ENCODE measurements at regions of chr1 and their contacts with region 1.

Region 1: DNA sequence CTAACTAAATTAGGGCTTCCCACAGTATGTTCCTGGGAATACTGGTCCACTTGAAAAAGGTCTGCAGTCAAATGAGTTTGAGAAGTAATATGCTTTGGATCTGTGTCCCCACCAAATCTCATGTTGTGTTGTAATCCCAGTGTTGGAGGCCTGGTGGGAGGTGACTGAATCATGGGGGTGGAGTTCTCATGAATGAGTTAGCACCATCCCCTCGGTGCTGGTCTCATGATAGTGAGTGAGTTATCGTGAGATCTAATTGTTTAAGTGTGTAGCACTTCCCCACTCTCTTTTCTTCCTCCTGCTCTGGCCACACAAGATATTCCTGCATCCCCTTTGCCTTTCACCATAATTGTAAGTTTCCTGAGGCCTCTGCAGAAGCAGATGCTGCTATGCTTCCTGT is 16.9 kb upstream of the DMRTB1 start:
- DNase-seq: no peak
- ATAC-seq: peak; percentile 73
- H3K4me3 Mint-ChIP-seq: no peak overlapping the region
- H3K27ac Mint-ChIP-seq: peak overlapping the region; percentile 70
- H3K4me1 Mint-ChIP-seq: peaks cover 44% of the 10 kb centered on the region
- H3K27me3 Mint-ChIP-seq: peaks cover 13% of the 10 kb centered on the region; the same call in 1 of the 2 replicates
- CTCF ChIP-seq: no peak

Region 2: GRCh38 chr1:53182111-53182593 is 260.1 kb before region 1 on chr1:
- CTCF ChIA-PET with region 1: no interaction called
- POLR2A ChIA-PET with region 1: no interaction called
- DNase-seq: peak; percentile 90
- ATAC-seq: peak; percentile 79
- H3K4me3 Mint-ChIP-seq: no peak overlapping the region
- H3K27ac Mint-ChIP-seq: no peak overlapping the region
- H3K4me1 Mint-ChIP-seq: no peaks in the 10 kb centered on the region
- H3K27me3 Mint-ChIP-seq: peaks cover 16% of the 10 kb centered on the region; the same call in 1 of the 2 replicates
- CTCF ChIP-seq: peak; percentile 93

Region 3: GRCh38 chr1:53430261-53430660 is 12.0 kb before region 1 on chr1:
- CTCF ChIA-PET with region 1: interaction called, 19 read pairs
- POLR2A ChIA-PET with region 1: no interaction called
- DNase-seq: no peak
- ATAC-seq: peak; percentile 9; the same call in 1 of the 2 replicates
- H3K4me3 Mint-ChIP-seq: peak overlapping the region; percentile 52
- H3K27ac Mint-ChIP-seq: peak overlapping the region; percentile 99
- H3K4me1 Mint-ChIP-seq: peaks cover 85% of the 10 kb centered on the region
- H3K27me3 Mint-ChIP-seq: peaks cover 33% of the 10 kb centered on the region
- CTCF ChIP-seq: no peak

Region 4: GRCh38 chr1:53470155-53470554 is 27.9 kb after region 1 on chr1:
- CTCF ChIA-PET with region 1: interaction called, 13 read pairs
- POLR2A ChIA-PET with region 1: no interaction called
- DNase-seq: peak; percentile 98
- ATAC-seq: peak; percentile 98
- H3K4me3 Mint-ChIP-seq: peak overlapping the region; percentile 7
- H3K27ac Mint-ChIP-seq: no peak overlapping the region
- H3K4me1 Mint-ChIP-seq: peaks cover 16% of the 10 kb centered on the region
- H3K27me3 Mint-ChIP-seq: peaks cover 22% of the 10 kb centered on the region
- CTCF ChIP-seq: peak; percentile 90

Region 5: GRCh38 chr1:53562291-53562980 is 120.1 kb after region 1 on chr1:
- CTCF ChIA-PET with region 1: no interaction called
- POLR2A ChIA-PET with region 1: no interaction called
- DNase-seq: peak; percentile 3
- ATAC-seq: no peak
- H3K4me3 Mint-ChIP-seq: no peak overlapping the region
- H3K27ac Mint-ChIP-seq: no peak overlapping the region
- H3K4me1 Mint-ChIP-seq: peaks cover 9% of the 10 kb centered on the region; the same call in 1 of the 2 replicates
- H3K27me3 Mint-ChIP-seq: peaks cover 10% of the 10 kb centered on the region
- CTCF ChIP-seq: no peak